Posterior cingulate gyrus (tissue), 11 donors: ENCODE measurements at regions of chr11 and their contacts with region 1.

Region 1: DNA sequence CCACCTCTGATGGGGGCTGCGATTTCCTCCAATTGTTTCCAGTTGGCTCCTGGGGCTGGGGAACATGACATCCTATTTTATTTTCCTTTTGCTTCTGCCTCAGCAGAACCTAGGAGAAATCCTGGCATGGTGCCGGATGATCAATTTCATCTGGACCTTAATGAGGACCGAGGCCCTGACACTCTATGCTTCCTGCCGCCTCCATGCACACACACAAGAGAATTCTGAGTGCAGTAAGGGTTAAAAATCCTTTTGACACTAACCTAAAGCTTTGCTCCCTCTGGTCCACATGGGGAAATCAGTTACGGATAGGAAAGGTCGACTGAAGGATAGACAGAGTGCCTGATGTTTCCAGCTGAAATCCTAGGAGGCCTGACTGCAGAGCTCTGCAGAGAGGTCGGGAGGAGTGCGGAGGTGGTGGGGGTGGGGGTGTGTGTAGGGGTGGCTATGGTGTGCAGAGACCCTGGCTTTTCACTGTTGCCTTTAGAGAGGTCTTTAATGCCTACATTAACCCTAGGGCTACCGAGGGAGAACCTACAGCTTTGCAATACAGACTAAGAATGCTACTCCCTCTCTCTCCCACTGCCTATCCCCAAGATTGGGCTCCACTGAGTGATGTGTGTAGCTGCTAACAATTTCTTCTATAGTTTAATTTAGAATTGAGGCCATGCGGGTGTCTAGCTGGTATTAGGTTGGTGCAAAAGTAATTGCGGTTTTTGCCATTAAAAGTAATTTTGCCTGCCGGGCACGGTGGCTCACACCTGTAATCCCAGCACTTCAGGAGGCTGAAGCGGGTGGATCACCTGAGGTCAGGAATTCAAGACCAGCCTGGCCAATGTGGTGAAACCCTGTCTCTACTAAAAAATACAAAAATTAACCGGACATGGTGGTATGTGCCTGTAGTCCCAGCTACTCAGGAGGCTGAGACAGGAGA is 53.6 kb upstream of the INCENP start:
- DNase-seq: peak in 1 of 10 donors; percentile 60

Region 2: DNA sequence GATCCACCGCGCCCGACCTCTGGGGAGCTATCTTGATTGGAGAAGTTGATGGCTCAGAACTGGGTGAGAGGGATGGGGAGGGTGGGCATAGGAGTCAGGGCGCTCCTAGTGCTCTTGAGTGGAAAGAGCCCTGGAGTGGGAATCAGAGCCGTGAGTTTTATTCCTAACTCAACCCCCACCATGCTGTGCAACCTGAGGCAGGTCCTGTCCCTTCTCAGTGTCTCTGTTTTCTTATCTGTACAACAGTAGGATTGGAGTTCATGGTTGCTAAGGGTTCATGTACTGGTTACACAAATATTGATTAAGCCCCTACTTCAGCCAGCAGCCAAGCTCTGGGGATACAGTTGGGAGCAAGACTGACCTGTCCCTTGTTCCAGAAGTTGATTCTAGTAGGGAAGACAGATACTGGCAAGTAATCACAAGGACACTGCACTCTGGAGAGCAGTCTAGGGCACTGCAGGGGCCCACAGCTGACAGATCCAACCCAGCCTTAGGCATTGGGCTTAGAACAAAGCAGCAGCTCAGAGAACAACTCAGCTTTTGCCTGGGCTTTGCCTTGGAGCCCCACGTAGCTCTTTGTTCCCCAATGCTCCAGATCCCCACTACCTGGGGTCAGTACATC is 402.5 kb before region 1 on chr11:
- intact Hi-C with region 1: loop called (anchors 5 kb)
- DNase-seq: peak in 1 of 10 donors; percentile 10

Region 3: GRCh38 chr11:61797263-61797944 is 272.8 kb before region 1 on chr11:
- intact Hi-C with region 1: no loop called
- DNase-seq: peak in 6 of 10 donors; percentile 80 to 94 (median 84)

Region 4: GRCh38 chr11:61827571-61828378 is 242.5 kb before region 1 on chr11 and contains the start of gene FADS2:
- intact Hi-C with region 1: no loop called
- DNase-seq: peak; percentile 86 to 99 (median 98)

Region 5: GRCh38 chr11:61945191-61945590 is 125.1 kb before region 1 on chr11:
- intact Hi-C with region 1: no loop called
- DNase-seq: no peak